ENCODE measurements at regions of chr18 and their contacts with region 1.

Region 1: GRCh38 chr18:35605686-35606417 is 24.3 kb downstream of the GALNT1 start:
- DNase-seq: peak in 2 of 9 experiments; percentile 11 to 14
- ATAC-seq: no peak
- H3K4me3 ChIP-seq: no peak overlapping the region
- H3K4me3 Mint-ChIP-seq: no peak overlapping the region
- H3K27ac ChIP-seq: no peak overlapping the region
- H3K27ac Mint-ChIP-seq: no peak overlapping the region
- H3K4me1 ChIP-seq: no peaks in the 10 kb centered on the region
- H3K4me1 Mint-ChIP-seq: peaks cover 37% of the 10 kb centered on the region
- H3K27me3 ChIP-seq: no peaks in the 10 kb centered on the region
- H3K27me3 Mint-ChIP-seq: no peaks in the 10 kb centered on the region
- CTCF ChIP-seq: no peak

Region 2: GRCh38 chr18:35623255-35623654 is 17.4 kb after region 1 on chr18:
- CTCF ChIA-PET with region 1: no interaction called
- POLR2A ChIA-PET with region 1: no interaction called
- intact Hi-C with region 1: loop called in 1 of 2 experiments (anchors 2 kb)
- DNase-seq: no peak
- ATAC-seq: no peak
- H3K4me3 ChIP-seq: no peak overlapping the region
- H3K4me3 Mint-ChIP-seq: no peak overlapping the region
- H3K27ac ChIP-seq: no peak overlapping the region
- H3K27ac Mint-ChIP-seq: no peak overlapping the region
- H3K4me1 ChIP-seq: peaks cover 16% of the 10 kb centered on the region
- H3K4me1 Mint-ChIP-seq: peaks cover 28% of the 10 kb centered on the region
- H3K27me3 ChIP-seq: no peaks in the 10 kb centered on the region
- H3K27me3 Mint-ChIP-seq: no peaks in the 10 kb centered on the region
- CTCF ChIP-seq: no peak

Region 3: DNA sequence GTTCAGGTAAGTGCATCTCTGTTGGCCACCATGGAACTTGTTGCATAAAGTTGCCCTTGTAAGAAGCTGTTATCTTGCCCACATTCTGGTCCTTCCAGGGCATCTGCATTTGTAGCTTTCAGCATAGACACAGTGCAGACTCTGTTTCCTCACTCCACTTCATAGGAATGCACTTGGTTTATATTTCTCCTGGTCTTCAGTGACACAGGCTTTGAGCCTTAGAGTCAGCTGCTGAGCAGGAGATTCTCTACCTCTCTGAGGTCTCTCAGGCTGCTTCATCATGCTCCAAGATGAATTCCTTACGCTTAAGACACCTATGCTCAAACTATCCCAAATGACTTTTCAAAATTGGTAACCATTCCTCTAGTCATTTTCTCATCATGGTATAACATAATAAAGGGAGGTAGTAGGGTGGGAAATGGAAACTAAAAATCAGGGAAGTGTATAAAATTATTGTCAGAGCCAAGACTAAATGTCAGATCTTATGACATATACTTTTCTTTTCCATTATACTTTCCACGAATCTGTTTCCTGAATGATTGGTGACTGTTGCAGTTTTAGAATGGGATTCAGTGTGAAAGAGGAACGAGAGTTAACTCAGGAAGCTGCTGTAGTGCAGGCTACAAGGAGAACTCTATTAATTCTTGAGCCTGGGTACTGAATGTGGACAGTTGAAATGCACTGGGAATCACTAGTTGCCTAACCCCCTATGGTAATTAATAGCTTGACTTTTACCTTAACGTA is 47.7 kb after region 1 on chr18:
- CTCF ChIA-PET with region 1: no interaction called
- POLR2A ChIA-PET with region 1: no interaction called
- intact Hi-C with region 1: loop called in 1 of 2 experiments (anchors 5 kb)
- DNase-seq: no peak
- ATAC-seq: no peak
- H3K4me3 ChIP-seq: no peak overlapping the region
- H3K4me3 Mint-ChIP-seq: no peak overlapping the region
- H3K27ac ChIP-seq: no peak overlapping the region
- H3K27ac Mint-ChIP-seq: no peak overlapping the region
- H3K4me1 ChIP-seq: no peaks in the 10 kb centered on the region
- H3K4me1 Mint-ChIP-seq: peaks cover 25% of the 10 kb centered on the region
- H3K27me3 ChIP-seq: no peaks in the 10 kb centered on the region
- H3K27me3 Mint-ChIP-seq: no peaks in the 10 kb centered on the region
- CTCF ChIP-seq: no peak